BJ (cell line): ENCODE measurements at regions of chr15 and their contacts with region 1.

Region 1: DNA sequence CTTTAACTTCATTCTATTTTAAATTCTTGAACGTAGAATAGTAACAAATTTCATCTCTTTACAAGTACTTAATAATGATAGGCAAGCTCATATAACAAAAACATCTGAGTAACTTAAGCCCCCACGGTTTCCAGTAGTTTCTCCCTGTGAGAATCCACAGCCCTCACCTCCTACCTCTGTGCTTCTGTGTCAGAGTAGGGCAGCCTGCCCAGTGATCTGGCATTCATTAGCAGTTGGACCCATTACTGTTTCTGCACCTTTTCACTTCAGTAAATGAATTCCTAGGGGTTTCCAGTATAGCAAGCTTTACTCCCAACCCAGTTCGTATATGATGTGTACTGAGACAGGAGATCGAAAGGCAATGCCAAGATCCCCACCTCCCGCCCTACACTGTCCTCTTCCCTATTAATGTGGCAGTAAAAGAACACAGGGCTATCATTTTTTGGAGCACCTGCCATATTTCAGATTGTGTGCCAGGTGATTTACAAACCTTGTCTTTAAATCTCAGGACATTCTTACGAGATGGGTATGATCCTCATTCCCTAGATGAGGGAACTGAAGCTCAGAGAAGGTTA is 40.8 kb downstream of the EIF2AK4 start:
- DNase-seq: no peak
- H3K4me3 ChIP-seq: no peak overlapping the region
- H3K27me3 ChIP-seq: no peaks in the 10 kb centered on the region
- CTCF ChIP-seq: no peak

Region 2: DNA sequence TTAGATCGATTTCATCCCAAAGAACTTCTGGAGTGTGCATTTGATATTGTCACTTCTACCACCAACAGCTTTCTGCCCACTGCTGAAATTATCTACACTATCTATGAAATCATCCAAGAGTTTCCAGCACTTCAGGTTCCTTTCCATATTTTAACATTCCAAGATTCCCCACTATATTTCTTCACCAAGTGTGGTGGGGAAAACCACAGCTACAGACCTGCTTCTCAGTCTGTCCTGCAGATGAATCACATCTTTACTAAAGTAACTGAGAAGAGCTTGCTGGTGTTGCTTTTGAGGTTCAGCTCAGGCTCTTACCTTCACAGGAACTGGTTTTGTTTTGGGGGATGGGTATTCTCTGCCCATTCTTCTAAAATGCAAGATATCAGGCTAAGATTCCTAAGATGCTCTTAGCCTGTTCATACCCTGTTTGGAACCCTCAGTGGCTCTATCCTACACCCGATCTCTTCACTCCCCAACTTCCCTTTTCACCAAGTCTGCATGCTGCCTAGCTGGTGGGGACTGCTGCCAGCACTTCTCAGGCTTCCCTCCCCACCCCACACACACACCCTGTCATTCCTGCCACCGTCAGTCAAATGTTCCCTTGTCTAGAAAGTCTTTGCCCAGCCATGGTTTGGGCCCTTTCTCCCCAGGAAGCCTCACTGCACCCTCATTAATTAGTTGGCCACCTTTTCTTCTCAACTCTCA is 33.5 kb after region 1 on chr15:
- CTCF ChIA-PET with region 1: no interaction called
- POLR2A ChIA-PET with region 1: interaction called, 12 read pairs
- DNase-seq: no peak
- H3K4me3 ChIP-seq: no peak overlapping the region
- H3K27me3 ChIP-seq: no peaks in the 10 kb centered on the region
- CTCF ChIP-seq: no peak

Region 3: GRCh38 chr15:40182358-40183029 is 207.8 kb after region 1 on chr15:
- CTCF ChIA-PET with region 1: no interaction called
- POLR2A ChIA-PET with region 1: no interaction called
- DNase-seq: no peak
- H3K4me3 ChIP-seq: no peak overlapping the region
- H3K27me3 ChIP-seq: no peaks in the 10 kb centered on the region
- CTCF ChIP-seq: no peak